Heart right ventricle (tissue), 16 donors: ENCODE measurements at regions of chr2 and their contacts with region 1.

Region 1: DNA sequence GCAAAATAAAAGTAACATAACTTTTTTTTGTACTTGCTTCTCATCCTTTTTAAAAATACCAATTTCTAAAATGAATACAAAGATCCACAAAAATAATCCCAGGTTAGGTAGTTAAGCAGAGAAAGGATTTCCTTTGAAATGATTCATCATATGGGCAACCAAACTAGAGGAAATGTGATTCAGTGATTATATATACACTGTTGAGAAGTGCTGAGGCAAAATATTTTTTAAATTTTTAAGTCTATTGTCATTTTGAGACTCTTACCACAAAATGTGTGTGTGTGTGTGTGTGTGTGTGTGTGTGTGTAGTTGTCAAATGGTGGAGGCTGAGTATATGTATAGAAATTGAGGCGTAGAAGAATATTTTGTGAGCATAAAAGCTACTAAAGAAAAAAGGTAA is 1075.3 kb downstream of the LRP1B start:
- DNase-seq: no peak
- ATAC-seq: no peak
- H3K4me3 ChIP-seq: no peak overlapping the region
- H3K27ac ChIP-seq: no peak overlapping the region
- H3K4me1 ChIP-seq: no peaks in the 10 kb centered on the region
- H3K27me3 ChIP-seq: no peaks in the 10 kb centered on the region
- CTCF ChIP-seq: no peak

Region 2: DNA sequence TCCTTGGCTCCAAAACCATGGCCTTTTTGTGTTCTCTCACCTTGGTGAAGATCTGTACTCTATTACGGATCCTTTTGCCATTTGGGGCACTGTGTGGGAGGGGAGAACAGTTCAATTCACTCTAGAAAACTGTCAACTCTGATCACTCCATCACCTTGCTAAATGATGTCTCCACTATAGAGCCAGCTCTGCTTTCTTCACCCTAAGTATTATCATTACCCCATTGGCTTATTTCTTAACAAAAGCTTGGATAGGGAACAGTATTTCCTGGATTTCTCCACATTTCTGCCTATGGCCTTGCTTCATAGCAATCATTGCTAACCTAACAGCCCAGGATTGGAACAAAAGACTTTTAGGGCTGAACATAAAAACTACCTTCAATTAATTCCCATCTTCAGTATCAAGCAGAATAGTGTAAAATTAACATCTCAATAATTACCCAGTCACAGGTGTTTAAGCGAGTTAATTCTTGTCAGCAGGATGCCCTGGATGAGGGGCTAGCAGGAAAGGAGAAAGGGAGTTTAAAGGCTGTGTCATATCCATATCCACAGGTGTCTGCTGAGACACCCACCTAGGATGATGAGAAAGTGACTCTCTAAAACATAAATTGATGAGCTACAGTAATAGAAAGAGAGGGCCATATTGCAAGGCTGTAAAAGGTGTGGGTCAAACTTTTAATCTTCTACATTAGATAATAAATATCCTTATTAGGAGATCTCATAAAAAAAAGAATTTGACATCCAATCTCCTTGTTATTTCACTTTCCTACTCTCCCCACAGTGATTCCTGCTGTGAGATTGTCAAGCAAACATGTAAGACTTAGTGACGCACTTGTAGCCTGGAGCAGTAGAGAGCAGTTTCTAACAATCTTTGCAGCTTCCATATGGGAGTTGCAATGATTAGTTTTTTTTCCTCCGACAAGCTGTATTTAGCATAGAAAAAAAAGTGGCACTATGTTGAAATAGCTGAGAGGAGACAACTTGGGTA is 1685.8 kb before region 1 on chr2:
- intact Hi-C with region 1: loop called in 1 of 10 experiments (anchors 5 kb)
- DNase-seq: no peak
- ATAC-seq: no peak
- H3K4me3 ChIP-seq: no peak overlapping the region
- H3K27ac ChIP-seq: no peak overlapping the region
- H3K4me1 ChIP-seq: no peaks in the 10 kb centered on the region
- H3K27me3 ChIP-seq: no peaks in the 10 kb centered on the region
- CTCF ChIP-seq: no peak